ENCODE measurements at regions of chr18 and their contacts with region 1.

Region 1: GRCh38 chr18:59837586-59837985 is 62.2 kb upstream of the PMAIP1 start:
- DNase-seq: peak; percentile 38 to 62
- H3K4me3 ChIP-seq: no peak overlapping the region
- H3K27ac ChIP-seq: no peak overlapping the region
- H3K4me1 ChIP-seq: no peaks in the 10 kb centered on the region
- H3K27me3 ChIP-seq: no peaks in the 10 kb centered on the region
- CTCF ChIP-seq: peak; percentile 93

Region 2: DNA sequence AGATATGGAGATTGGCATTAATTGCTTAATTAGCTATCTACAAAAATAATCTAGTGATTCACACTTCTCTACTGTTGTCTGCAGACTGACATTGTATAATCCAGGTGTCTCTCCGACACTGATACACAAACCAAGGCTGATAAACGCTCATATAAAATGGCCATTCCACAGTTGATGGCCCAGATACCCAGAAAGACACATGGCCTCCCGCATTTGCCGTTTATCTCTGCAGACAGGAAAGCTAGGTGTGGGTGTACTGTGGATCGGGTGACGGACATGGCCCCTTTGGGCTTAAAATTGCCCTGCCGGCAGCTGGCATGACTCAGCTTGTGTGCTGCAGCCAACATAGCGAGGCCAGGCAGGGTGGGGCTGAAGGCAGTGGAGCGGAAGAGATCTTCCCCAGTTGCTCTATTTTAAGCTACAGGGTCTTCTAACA is 80.8 kb after region 1 on chr18:
- CTCF ChIA-PET with region 1: interaction called, 3 read pairs
- POLR2A ChIA-PET with region 1: no interaction called
- intact Hi-C with region 1: loop called (anchors 5 kb)
- DNase-seq: peak; percentile 86 to 94
- H3K4me3 ChIP-seq: peak overlapping the region; percentile 20; the same call in 1 of the 2 replicates
- H3K27ac ChIP-seq: peak overlapping the region; percentile 94
- H3K4me1 ChIP-seq: peaks cover 76% of the 10 kb centered on the region
- H3K27me3 ChIP-seq: no peaks in the 10 kb centered on the region
- CTCF ChIP-seq: no peak

Region 3: GRCh38 chr18:60053747-60054304 is 216.2 kb after region 1 on chr18:
- CTCF ChIA-PET with region 1: no interaction called
- POLR2A ChIA-PET with region 1: no interaction called
- intact Hi-C with region 1: loop called (anchors 5 kb)
- DNase-seq: peak; percentile 70 to 99
- H3K4me3 ChIP-seq: no peak overlapping the region; the same call in 1 of the 2 replicates
- H3K27ac ChIP-seq: peak overlapping the region; percentile 91
- H3K4me1 ChIP-seq: peaks cover 27% of the 10 kb centered on the region
- H3K27me3 ChIP-seq: no peaks in the 10 kb centered on the region
- CTCF ChIP-seq: no peak

Region 4: GRCh38 chr18:60549338-60549960 is 711.9 kb after region 1 on chr18:
- CTCF ChIA-PET with region 1: no interaction called
- POLR2A ChIA-PET with region 1: no interaction called
- intact Hi-C with region 1: loop called (anchors 5 kb)
- DNase-seq: peak in 1 of 2 experiments; percentile 58
- H3K4me3 ChIP-seq: peak overlapping the region; percentile 35; the same call in 1 of the 2 replicates
- H3K27ac ChIP-seq: no peak overlapping the region
- H3K4me1 ChIP-seq: no peaks in the 10 kb centered on the region
- H3K27me3 ChIP-seq: no peaks in the 10 kb centered on the region
- CTCF ChIP-seq: peak; percentile 92

Measured in PC-9 (cell line).